ENCODE measurements at regions of chr6 and their contacts with region 1.

Region 1: GRCh38 chr6:158649289-158650143 is at the start of gene SYTL3:
- DNase-seq: peak; percentile 58 to 93 (median 90)
- ATAC-seq: peak; percentile 78
- H3K4me3 ChIP-seq: peak within 1 kb of the TSS; percentile 44
- H3K4me3 Mint-ChIP-seq: peak within 1 kb of the TSS; percentile 66 to 87 (median 80)
- H3K27ac ChIP-seq: peak within 1 kb of the TSS; percentile 83
- H3K27ac Mint-ChIP-seq: peak within 1 kb of the TSS; percentile 90 to 99 (median 96)
- H3K4me1 ChIP-seq: peaks cover 38 to 46% of the 10 kb centered on the region in 2 donors
- H3K4me1 Mint-ChIP-seq: peaks cover 42 to 75% (median 67%) of the 10 kb centered on the region in 7 donors
- H3K27me3 ChIP-seq: no peaks in the 10 kb centered on the region
- H3K27me3 Mint-ChIP-seq: no peaks in the 10 kb centered on the region
- total RNA-seq, gene SYTL3: 25.8 to 67.0 (median 31.1) TPM

Region 2: DNA sequence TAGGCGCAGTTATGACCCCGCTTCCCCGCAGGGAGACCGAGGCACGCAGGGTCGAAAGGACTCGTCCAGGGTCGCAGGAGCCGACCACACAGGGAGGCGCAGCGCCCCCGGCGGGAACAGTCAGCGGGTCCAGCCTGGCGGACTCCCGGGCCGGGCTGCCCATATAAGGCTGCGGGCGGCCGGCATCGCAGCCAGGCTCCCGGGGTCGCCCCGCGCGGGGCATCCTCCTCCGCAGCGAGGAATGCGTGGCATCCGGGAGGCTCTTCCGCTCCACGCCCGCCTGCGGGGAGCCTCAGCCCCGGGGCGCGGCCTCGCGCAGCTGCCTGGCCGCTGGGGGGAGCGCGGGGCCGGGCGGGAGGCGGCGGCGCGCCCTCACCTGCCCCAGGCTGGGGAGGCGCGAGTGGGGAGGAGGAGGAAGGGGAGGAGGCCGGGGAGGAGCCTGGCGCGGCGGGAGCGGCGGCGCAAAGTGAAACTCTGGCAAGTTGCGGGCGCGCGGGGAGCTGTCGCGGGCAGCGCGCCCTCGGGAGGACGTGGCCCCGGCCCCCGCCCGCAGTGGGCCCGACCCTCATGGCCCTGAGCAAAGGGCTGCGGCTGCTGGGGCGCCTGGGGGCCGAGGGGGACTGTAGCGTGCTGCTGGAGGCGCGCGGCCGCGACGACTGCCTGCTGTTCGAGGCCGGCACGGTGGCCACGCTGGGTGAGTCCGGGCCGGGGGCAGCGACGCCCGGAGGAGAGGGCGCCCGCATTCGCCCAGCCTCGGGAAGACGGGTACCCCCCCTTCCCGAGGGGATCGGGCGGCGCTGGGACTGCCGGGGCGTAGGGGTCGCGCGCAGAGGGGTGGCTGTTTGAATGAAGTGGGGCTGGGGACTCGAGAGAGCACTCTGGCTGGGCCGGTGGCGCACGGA is 667.9 kb before region 1 on chr6 and contains the start of gene SYNJ2:
- CTCF ChIA-PET with region 1: no interaction called
- POLR2A ChIA-PET with region 1: no interaction called
- intact Hi-C with region 1: loop called in 1 of 2 experiments (anchors 5 kb)
- DNase-seq: peak; percentile 73 to 89 (median 87)
- ATAC-seq: peak; percentile 96
- H3K4me3 ChIP-seq: peak within 1 kb of the TSS; percentile 81
- H3K4me3 Mint-ChIP-seq: peak within 1 kb of the TSS; percentile 75 to 94 (median 84)
- H3K27ac ChIP-seq: peak within 1 kb of the TSS; percentile 83
- H3K27ac Mint-ChIP-seq: peak within 1 kb of the TSS; percentile 78 to 95 (median 88)
- H3K4me1 ChIP-seq: peaks cover 27 to 38% of the 10 kb centered on the region in 2 donors
- H3K4me1 Mint-ChIP-seq: peaks cover 26 to 65% (median 55%) of the 10 kb centered on the region in 7 donors
- H3K27me3 ChIP-seq: no peaks in the 10 kb centered on the region
- H3K27me3 Mint-ChIP-seq: no peaks in the 10 kb centered on the region
- total RNA-seq, gene SYNJ2: 22.4 to 36.6 (median 22.5) TPM

Region 3: DNA sequence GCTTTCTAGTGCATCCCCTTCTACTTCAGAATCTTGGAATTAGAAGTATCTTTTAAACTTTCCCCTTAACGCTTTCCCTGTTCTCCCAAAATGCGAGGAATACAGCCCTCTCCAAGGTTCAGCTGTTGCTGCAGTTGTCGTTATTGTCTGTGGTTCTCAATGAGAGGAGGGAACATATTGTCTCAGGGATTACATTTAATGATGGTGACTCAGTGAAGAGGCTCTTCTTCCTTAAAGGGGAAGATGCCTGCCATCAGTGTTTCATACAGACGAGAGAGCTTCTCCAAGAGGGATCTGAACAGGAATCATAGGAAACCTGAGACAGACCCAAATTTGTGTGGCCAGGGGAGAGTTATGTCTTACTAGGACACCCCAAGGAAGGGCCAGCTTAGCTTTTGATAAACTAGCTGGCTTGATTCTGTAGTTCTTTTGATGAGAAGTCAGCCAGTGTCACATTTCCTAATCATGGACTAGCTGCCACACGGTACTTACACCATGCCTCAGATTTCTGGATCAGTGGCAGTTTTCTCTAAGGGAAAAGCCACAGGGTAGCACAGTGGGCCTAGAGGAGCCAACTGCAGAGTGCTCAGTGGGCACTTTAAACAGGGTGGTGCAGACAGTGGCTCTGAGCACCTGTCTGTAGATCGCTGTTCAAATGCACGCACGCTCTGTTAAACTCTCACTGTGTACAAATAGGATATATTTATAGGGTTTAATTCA is 149.3 kb before region 1 on chr6:
- CTCF ChIA-PET with region 1: no interaction called
- POLR2A ChIA-PET with region 1: no interaction called
- intact Hi-C with region 1: no loop called
- DNase-seq: no peak
- ATAC-seq: no peak
- H3K4me3 ChIP-seq: no peak overlapping the region
- H3K4me3 Mint-ChIP-seq: no peak overlapping the region
- H3K27ac ChIP-seq: no peak overlapping the region
- H3K27ac Mint-ChIP-seq: peak overlapping the region in 2 of 9 donors; percentile 9 to 59
- H3K4me1 ChIP-seq: no peaks in the 10 kb centered on the region
- H3K4me1 Mint-ChIP-seq: no peaks in the 10 kb centered on the region
- H3K27me3 ChIP-seq: no peaks in the 10 kb centered on the region
- H3K27me3 Mint-ChIP-seq: no peaks in the 10 kb centered on the region

Region 4: GRCh38 chr6:158559895-158560835 is 89.4 kb before region 1 on chr6 and contains the start of gene TMEM181:
- CTCF ChIA-PET with region 1: no interaction called
- POLR2A ChIA-PET with region 1: interaction called, 4 read pairs
- intact Hi-C with region 1: loop called (anchors 1 kb)
- DNase-seq: peak; percentile 73 to 87 (median 86)
- ATAC-seq: peak; percentile 96
- H3K4me3 ChIP-seq: peak within 1 kb of the TSS; percentile 76
- H3K4me3 Mint-ChIP-seq: peak within 1 kb of the TSS; percentile 90 to 98 (median 94)
- H3K27ac ChIP-seq: peak within 1 kb of the TSS; percentile 94
- H3K27ac Mint-ChIP-seq: peak within 1 kb of the TSS; percentile 93 to 97 (median 94)
- H3K4me1 ChIP-seq: peaks cover 30 to 38% of the 10 kb centered on the region in 2 donors
- H3K4me1 Mint-ChIP-seq: peaks cover 26 to 46% (median 44%) of the 10 kb centered on the region in 7 donors
- H3K27me3 ChIP-seq: no peaks in the 10 kb centered on the region
- H3K27me3 Mint-ChIP-seq: peaks cover 0 to 17% (median 0%) of the 10 kb centered on the region in 5 donors
- total RNA-seq, gene TMEM181: 14.9 to 17.2 (median 16.5) TPM

Region 5: GRCh38 chr6:158686791-158687381 is 37.4 kb after region 1 on chr6:
- CTCF ChIA-PET with region 1: interaction called, 19 read pairs
- POLR2A ChIA-PET with region 1: interaction called, 5 read pairs
- intact Hi-C with region 1: loop called (anchors 1 kb)
- DNase-seq: peak; percentile 29 to 92 (median 87)
- ATAC-seq: peak; percentile 96
- H3K4me3 ChIP-seq: peak overlapping the region; percentile 31
- H3K4me3 Mint-ChIP-seq: peak overlapping the region; percentile 66 to 91 (median 79)
- H3K27ac ChIP-seq: peak overlapping the region; percentile 82
- H3K27ac Mint-ChIP-seq: peak overlapping the region; percentile 88 to 100 (median 98)
- H3K4me1 ChIP-seq: peaks cover 28 to 49% of the 10 kb centered on the region in 2 donors
- H3K4me1 Mint-ChIP-seq: peaks cover 36 to 76% (median 70%) of the 10 kb centered on the region in 7 donors
- H3K27me3 ChIP-seq: no peaks in the 10 kb centered on the region
- H3K27me3 Mint-ChIP-seq: no peaks in the 10 kb centered on the region

Region 6: DNA sequence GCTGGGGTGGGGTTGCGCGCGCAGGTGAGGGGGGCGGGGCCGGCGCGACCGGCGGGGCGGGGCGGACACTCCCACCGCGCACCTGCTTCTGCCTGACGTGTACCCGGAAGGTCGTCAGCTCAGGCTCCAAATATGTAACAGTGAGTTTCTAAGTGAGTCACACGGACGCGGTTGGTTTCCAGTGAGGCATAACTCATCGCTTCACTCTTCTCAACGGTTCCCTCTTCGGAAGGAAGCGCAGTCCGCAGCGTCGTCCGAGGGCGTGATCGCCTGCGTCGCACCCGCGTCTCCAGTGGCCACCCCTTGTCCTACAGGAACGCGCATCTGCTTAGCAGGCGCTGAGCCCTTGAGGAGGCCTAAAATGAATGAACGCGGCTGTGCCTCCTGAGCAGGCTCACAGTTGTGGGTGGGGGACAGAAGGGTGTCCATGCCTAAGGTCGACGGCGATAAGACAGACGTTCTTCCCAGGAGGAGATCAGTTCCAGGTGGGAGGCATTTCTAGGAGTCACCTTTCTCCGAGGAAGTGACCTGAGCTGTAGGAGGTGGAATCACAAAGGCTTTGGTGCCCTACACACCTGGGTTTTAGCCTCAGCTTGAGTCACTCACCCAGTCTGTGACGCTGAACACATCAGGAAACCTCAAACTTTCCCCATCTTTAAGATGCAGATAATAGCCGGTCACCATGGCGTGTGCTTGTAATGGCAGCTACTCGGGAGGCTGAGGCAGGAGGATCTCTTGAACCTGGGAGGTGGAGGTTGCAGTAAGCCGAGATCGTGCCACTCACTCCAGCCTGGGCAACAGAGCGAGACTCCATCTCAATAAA is 220.5 kb after region 1 on chr6:
- CTCF ChIA-PET with region 1: interaction called, 3 read pairs
- POLR2A ChIA-PET with region 1: interaction called, 10 read pairs
- intact Hi-C with region 1: loop called (anchors 1 to 2 kb)
- DNase-seq: peak in 1 of 9 donors; percentile 97
- ATAC-seq: peak; percentile 87
- H3K4me3 ChIP-seq: peak overlapping the region; percentile 71
- H3K4me3 Mint-ChIP-seq: peak overlapping the region; percentile 83 to 96 (median 92)
- H3K27ac ChIP-seq: peak overlapping the region; percentile 98
- H3K27ac Mint-ChIP-seq: peak overlapping the region; percentile 98 to 100 (median 100)
- H3K4me1 ChIP-seq: peaks cover 16 to 18% of the 10 kb centered on the region in 2 donors
- H3K4me1 Mint-ChIP-seq: peaks cover 7 to 45% (median 25%) of the 10 kb centered on the region in 7 donors
- H3K27me3 ChIP-seq: no peaks in the 10 kb centered on the region
- H3K27me3 Mint-ChIP-seq: peaks cover 0 to 5% (median 0%) of the 10 kb centered on the region in 5 donors